Endothelial cell of umbilical vein (primary cell): ENCODE measurements at regions of chr5 and their contacts with region 1.

Region 1: DNA sequence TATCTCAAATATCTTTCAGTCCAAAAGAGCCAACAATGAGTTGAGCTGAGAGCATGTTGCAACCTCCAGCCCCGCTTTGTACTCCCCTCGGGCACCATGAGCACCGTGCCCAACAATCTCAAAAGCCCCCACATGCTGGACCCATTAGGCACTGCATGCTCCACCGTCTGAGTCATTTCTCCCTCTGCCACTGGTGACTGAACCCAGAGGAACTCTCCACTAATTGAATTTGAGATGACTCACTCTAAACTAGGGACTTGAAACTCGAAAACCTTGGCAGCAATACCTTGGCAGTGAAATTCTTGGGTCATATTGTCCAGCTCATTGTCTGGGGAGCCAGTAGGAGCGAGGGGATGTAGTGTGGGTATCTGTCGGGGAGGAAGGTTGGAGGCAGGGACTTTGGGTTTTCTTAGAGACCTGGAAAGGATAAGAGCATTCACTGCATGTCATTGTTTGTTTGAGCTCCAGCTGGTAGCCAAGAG is 49.9 kb upstream of the SLIT3 start:
- DNase-seq: peak; percentile 94
- H3K4me3 ChIP-seq: no peak overlapping the region
- H3K27ac ChIP-seq: peak overlapping the region; percentile 74
- H3K4me1 ChIP-seq: peaks cover 57% of the 10 kb centered on the region
- H3K27me3 ChIP-seq: no peaks in the 10 kb centered on the region
- CTCF ChIP-seq: peak in 1 of 2 donors; percentile 1
- POLR2A ChIP-seq: no peak

Region 2: DNA sequence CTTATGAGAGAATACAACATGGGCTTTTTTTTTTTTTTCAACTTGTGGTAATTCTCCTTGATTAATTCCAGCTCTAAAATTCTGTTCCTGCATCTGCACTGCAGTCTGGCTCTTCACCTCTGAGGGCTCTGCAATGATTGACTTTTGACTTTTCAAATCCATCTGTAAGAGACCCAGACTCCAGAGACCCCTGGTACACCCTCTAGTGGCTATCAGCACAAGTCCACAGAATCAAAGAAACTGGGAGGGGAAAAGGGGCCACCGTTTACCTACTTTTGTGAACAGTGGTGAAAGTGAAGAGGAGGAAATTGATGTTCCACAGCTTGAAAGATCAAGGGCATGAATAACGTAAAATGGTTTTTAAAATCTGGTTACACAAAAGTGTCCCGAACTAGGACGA is 201.5 kb before region 1 on chr5:
- CTCF ChIA-PET with region 1: no interaction called
- POLR2A ChIA-PET with region 1: no interaction called
- dilution Hi-C with region 1: no loop called
- intact Hi-C with region 1: no loop called
- DNase-seq: no peak
- H3K4me3 ChIP-seq: no peak overlapping the region
- H3K27ac ChIP-seq: no peak overlapping the region
- H3K4me1 ChIP-seq: no peaks in the 10 kb centered on the region
- H3K27me3 ChIP-seq: no peaks in the 10 kb centered on the region
- CTCF ChIP-seq: peak in 1 of 2 donors; percentile 10
- POLR2A ChIP-seq: no peak

Region 3: GRCh38 chr5:169161022-169161680 is 189.6 kb before region 1 on chr5:
- CTCF ChIA-PET with region 1: interaction called, 3 read pairs
- POLR2A ChIA-PET with region 1: no interaction called
- dilution Hi-C with region 1: no loop called
- intact Hi-C with region 1: loop called (anchors 2 kb)
- DNase-seq: peak; percentile 53
- H3K4me3 ChIP-seq: no peak overlapping the region
- H3K27ac ChIP-seq: peak overlapping the region; percentile 51
- H3K4me1 ChIP-seq: peaks cover 35% of the 10 kb centered on the region
- H3K27me3 ChIP-seq: no peaks in the 10 kb centered on the region
- CTCF ChIP-seq: no peak
- POLR2A ChIP-seq: no peak

Region 4: DNA sequence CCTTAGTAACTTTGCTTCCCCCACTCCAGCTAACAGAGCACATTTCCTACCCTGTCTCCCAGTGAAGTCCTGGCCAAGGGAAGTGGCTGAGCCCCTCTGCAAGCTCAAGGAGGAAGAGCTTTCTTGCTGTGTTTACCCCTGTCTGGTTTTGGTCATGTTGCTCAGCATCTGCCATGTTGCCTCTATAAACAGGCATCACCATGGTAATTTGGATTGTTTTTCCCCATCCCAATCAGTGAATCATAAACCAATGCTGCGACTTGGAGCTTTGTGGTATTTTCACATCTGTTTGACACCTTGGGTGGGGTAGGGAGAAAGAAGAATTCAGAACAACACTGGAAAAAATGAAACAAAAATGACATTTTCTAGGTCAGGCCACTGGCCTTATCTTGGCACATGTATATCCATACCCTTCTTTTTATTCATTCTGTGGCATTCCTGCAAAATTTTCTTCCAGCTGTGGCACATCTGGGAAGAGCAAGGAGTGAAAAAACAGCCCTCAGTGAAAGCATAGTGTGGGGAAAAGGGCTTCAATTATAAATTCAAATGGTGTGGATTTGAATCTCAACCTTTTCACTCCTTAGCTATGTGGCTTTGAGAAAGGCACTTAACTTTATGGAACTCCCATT is 92.3 kb before region 1 on chr5:
- CTCF ChIA-PET with region 1: no interaction called
- POLR2A ChIA-PET with region 1: no interaction called
- dilution Hi-C with region 1: no loop called
- intact Hi-C with region 1: no loop called
- DNase-seq: no peak
- H3K4me3 ChIP-seq: no peak overlapping the region
- H3K27ac ChIP-seq: no peak overlapping the region
- H3K4me1 ChIP-seq: no peaks in the 10 kb centered on the region
- H3K27me3 ChIP-seq: no peaks in the 10 kb centered on the region
- CTCF ChIP-seq: no peak
- POLR2A ChIP-seq: no peak

Region 5: GRCh38 chr5:169367861-169368260 is 17.1 kb after region 1 on chr5:
- CTCF ChIA-PET with region 1: interaction called, 3 read pairs
- POLR2A ChIA-PET with region 1: no interaction called
- dilution Hi-C with region 1: no loop called
- intact Hi-C with region 1: loop called (anchors 2 kb)
- DNase-seq: peak; percentile 44
- H3K4me3 ChIP-seq: no peak overlapping the region
- H3K27ac ChIP-seq: no peak overlapping the region
- H3K4me1 ChIP-seq: peaks cover 13% of the 10 kb centered on the region
- H3K27me3 ChIP-seq: no peaks in the 10 kb centered on the region
- CTCF ChIP-seq: no peak
- POLR2A ChIP-seq: no peak

Region 6: GRCh38 chr5:169695919-169696490 is 345.2 kb after region 1 on chr5:
- CTCF ChIA-PET with region 1: no interaction called
- POLR2A ChIA-PET with region 1: no interaction called
- dilution Hi-C with region 1: no loop called
- intact Hi-C with region 1: loop called (anchors 1 kb)
- DNase-seq: peak; percentile 96
- H3K4me3 ChIP-seq: no peak overlapping the region
- H3K27ac ChIP-seq: peak overlapping the region; percentile 98
- H3K4me1 ChIP-seq: peaks cover 30% of the 10 kb centered on the region
- H3K27me3 ChIP-seq: no peaks in the 10 kb centered on the region
- CTCF ChIP-seq: no peak
- POLR2A ChIP-seq: peak; percentile 74